HCT116 (cell line): ENCODE measurements at regions of chr4 and their contacts with region 1.

Region 1: GRCh38 chr4:74376888-74377483 is 12.0 kb downstream of the EREG start:
- DNase-seq: no peak
- ATAC-seq: no peak
- H3K4me3 ChIP-seq: no peak overlapping the region
- H3K27ac ChIP-seq: peak overlapping the region; percentile 94
- H3K4me1 ChIP-seq: peaks cover 53 to 86% of the 10 kb centered on the region in 2 experiments
- H3K27me3 ChIP-seq: no peaks in the 10 kb centered on the region
- CTCF ChIP-seq: peak in 2 of 3 experiments; percentile 57 to 62; a peak in 4 of 6 replicates
- POLR2A ChIP-seq: no peak
- RAD21 ChIP-seq: peak; percentile 76

Region 2: DNA sequence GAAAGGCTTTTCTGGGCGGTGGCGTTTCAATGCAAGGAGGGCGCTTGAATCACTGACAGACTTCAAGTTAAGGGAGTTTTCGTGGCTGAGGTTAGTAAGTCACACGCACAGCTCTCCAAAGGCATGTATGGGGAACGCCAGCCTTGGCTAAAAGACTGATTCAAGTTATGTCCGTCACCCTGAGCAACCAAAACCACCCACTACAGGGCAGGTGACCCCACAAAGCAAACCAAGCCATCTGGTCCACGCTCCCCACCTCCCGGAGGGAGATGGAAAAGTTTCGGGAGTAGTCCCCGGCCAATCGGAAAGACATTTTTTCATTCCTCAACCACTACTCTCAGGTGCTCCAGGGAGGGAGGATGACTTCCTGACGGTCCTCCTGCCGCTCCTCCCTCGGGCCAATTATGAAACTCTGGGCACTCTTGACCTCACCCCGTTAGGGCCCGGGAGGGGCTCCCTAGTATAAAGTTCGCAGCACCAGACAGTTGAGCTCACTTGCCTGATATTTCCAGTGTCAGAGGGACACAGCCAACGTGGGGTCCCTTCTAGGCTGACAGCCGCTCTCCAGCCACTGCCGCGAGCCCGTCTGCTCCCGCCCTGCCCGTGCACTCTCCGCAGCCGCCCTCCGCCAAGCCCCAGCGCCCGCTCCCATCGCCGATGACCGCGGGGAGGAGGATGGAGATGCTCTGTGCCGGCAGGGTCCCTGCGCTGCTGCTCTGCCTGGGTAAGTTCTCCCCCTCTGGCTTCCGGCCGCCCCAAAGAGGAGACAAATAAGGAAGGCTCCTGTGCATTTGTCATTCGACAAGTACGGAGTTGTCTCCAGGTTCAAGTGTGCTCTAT is 12.1 kb before region 1 on chr4 and contains the start of gene EREG:
- CTCF ChIA-PET with region 1: interaction called, 3 read pairs
- POLR2A ChIA-PET with region 1: interaction called, 3 read pairs
- RAD21 ChIA-PET with region 1: interaction called in 1 of 2 experiments, 5 read pairs
- intact Hi-C with region 1: loop called (anchors 1 kb)
- DNase-seq: peak; percentile 74
- ATAC-seq: peak; percentile 71
- H3K4me3 ChIP-seq: peak within 1 kb of the TSS; percentile 76 to 91
- H3K27ac ChIP-seq: peak within 1 kb of the TSS; percentile 94
- H3K4me1 ChIP-seq: peaks cover 50 to 89% of the 10 kb centered on the region in 2 experiments
- H3K27me3 ChIP-seq: no peaks in the 10 kb centered on the region
- CTCF ChIP-seq: no peak
- POLR2A ChIP-seq: peak; percentile 76
- RAD21 ChIP-seq: no peak
- total RNA-seq, gene EREG: 498 TPM